ENCODE measurements at regions of chr10 and their contacts with region 1.

Region 1: DNA sequence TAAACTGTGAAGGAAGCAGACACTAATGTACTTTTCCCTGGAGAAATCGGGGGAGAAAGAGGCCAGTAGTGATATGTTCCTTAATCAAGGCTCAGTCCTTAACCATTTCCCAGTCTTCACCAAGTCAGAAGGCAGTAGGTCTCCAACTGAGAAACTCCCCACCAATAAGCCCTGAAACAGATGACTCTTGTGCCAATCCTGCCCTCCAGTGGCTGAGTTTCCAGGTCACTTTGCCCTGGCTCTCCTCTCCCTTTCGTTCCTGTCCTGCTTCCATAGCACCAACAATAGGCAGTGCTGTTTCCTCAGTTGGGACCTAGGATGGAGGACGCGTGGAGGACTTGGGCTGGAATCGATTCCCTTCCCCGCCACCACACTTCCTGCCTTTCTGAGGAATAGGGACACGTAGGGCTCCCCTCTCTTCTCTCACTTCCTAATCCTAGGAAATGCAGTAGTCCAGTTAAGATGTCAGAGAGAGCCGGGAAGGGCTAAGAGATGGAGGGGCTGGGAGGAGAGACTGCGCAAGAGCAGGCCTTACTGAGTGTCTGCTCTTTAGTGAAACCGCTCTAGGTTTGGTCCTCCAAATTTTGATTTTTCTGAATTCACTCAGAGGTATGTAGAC is 23.4 kb downstream of the ATOH7 start:
- DNase-seq: peak; percentile 81
- ATAC-seq: peak; percentile 97
- H3K4me3 ChIP-seq: no peak overlapping the region
- H3K27ac ChIP-seq: no peak overlapping the region
- H3K4me1 ChIP-seq: peaks cover 0 to 7% of the 10 kb centered on the region in 2 experiments; a peak in 1 of 4 replicates
- H3K27me3 ChIP-seq: no peaks in the 10 kb centered on the region
- CTCF ChIP-seq: peak; percentile 79 to 95 (median 80)
- POLR2A ChIP-seq: no peak
- RAD21 ChIP-seq: peak; percentile 98

Region 2: GRCh38 chr10:67788025-67788886 is 420.3 kb before region 1 on chr10:
- CTCF ChIA-PET with region 1: interaction called, 11 read pairs
- POLR2A ChIA-PET with region 1: no interaction called
- RAD21 ChIA-PET with region 1: interaction called, 5 read pairs
- intact Hi-C with region 1: loop called (anchors 1 kb)
- DNase-seq: peak; percentile 42
- ATAC-seq: peak; percentile 96
- H3K4me3 ChIP-seq: no peak overlapping the region
- H3K27ac ChIP-seq: no peak overlapping the region
- H3K4me1 ChIP-seq: peaks cover 0 to 7% of the 10 kb centered on the region in 2 experiments; a peak in 1 of 4 replicates
- H3K27me3 ChIP-seq: no peaks in the 10 kb centered on the region
- CTCF ChIP-seq: peak; percentile 69 to 89 (median 89); a peak in 5 of 6 replicates
- POLR2A ChIP-seq: no peak
- RAD21 ChIP-seq: peak; percentile 84

Region 3: GRCh38 chr10:67912339-67912946 is 296.1 kb before region 1 on chr10:
- CTCF ChIA-PET with region 1: no interaction called
- POLR2A ChIA-PET with region 1: no interaction called
- RAD21 ChIA-PET with region 1: no interaction called
- intact Hi-C with region 1: no loop called
- DNase-seq: no peak
- ATAC-seq: no peak
- H3K4me3 ChIP-seq: no peak overlapping the region
- H3K27ac ChIP-seq: no peak overlapping the region
- H3K4me1 ChIP-seq: no peaks in the 10 kb centered on the region
- H3K27me3 ChIP-seq: no peaks in the 10 kb centered on the region
- CTCF ChIP-seq: no peak
- POLR2A ChIP-seq: no peak
- RAD21 ChIP-seq: no peak

Region 4: DNA sequence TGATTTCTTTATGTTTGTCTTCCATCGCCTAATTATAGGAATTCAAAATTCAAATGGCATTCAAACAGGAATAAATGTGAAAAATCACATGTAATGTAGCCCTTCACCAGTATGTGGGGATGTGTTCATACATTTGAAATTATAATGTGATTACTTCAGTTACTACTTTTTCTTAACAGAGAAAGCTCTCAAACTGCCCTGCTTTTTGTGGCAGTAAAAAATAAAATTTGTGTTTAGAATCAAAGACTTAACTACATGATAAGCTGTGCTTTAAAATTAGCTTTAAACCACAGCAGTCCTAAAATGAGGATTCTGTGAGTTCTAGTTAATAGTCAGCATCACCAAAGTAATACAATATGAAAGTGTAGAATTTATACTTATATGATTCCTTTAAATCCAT is 125.7 kb before region 1 on chr10:
- CTCF ChIA-PET with region 1: interaction called, 13 read pairs
- POLR2A ChIA-PET with region 1: no interaction called
- RAD21 ChIA-PET with region 1: no interaction called
- intact Hi-C with region 1: loop called (anchors 1 kb)
- DNase-seq: no peak
- ATAC-seq: peak; percentile 52; the same call in 1 of the 2 replicates
- H3K4me3 ChIP-seq: no peak overlapping the region
- H3K27ac ChIP-seq: no peak overlapping the region
- H3K4me1 ChIP-seq: peaks cover 11 to 30% of the 10 kb centered on the region in 2 experiments
- H3K27me3 ChIP-seq: no peaks in the 10 kb centered on the region
- CTCF ChIP-seq: peak; percentile 32 to 84 (median 69); a peak in 5 of 6 replicates
- POLR2A ChIP-seq: no peak
- RAD21 ChIP-seq: peak; percentile 87

Region 5: GRCh38 chr10:68231106-68231816 is 22.7 kb after region 1 on chr10:
- CTCF ChIA-PET with region 1: interaction called, 10 read pairs
- POLR2A ChIA-PET with region 1: no interaction called
- RAD21 ChIA-PET with region 1: no interaction called
- intact Hi-C with region 1: no loop called
- DNase-seq: peak; percentile 45
- ATAC-seq: peak; percentile 95
- H3K4me3 ChIP-seq: peak overlapping the region; percentile 42 to 57
- H3K27ac ChIP-seq: peak overlapping the region; percentile 9; the same call in 1 of the 2 replicates
- H3K4me1 ChIP-seq: peaks cover 5 to 13% of the 10 kb centered on the region in 2 experiments; a peak in 3 of 4 replicates
- H3K27me3 ChIP-seq: no peaks in the 10 kb centered on the region
- CTCF ChIP-seq: no peak
- POLR2A ChIP-seq: no peak
- RAD21 ChIP-seq: no peak

Region 6: DNA sequence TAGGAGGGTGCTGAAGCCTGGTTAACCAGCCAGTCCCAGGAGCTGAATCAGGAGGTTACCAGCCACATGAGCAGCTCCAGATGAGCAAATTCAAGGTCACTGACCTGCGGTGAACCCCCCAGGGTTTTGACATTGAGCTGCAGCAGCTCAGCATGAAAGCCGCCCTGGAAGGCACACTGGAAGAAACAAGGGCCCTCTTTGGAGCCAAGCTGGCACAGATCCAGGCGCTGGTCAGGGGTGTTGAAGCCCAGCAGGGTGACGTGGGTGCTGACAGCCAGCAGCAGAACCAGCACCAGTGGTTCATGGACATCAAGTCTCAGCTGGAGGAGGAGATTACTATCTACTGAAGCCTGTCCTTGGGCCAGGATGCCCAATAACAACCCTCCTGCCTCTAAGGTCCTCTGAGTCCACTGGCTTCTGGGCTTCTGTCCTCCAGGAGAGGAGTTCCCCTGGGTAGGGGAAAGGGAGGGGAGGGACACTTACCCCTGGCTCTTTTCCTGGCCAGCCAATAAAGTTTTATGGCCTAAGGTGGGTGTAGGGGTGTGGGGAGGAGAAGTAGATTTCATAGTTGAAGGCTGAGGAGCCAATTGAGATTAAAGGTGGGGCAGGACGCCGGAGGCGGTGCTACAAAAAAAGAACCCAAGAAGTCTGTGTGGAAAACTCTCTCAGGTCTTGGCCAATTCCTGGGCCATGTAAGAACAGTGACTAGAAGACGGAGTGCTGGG is 52.8 kb after region 1 on chr10:
- CTCF ChIA-PET with region 1: no interaction called
- POLR2A ChIA-PET with region 1: no interaction called
- RAD21 ChIA-PET with region 1: no interaction called
- intact Hi-C with region 1: no loop called
- DNase-seq: no peak
- ATAC-seq: no peak
- H3K4me3 ChIP-seq: no peak overlapping the region
- H3K27ac ChIP-seq: no peak overlapping the region
- H3K4me1 ChIP-seq: no peaks in the 10 kb centered on the region
- H3K27me3 ChIP-seq: no peaks in the 10 kb centered on the region
- CTCF ChIP-seq: no peak
- POLR2A ChIP-seq: no peak
- RAD21 ChIP-seq: no peak

Region 7: GRCh38 chr10:68897336-68897741 is 688.8 kb after region 1 on chr10:
- CTCF ChIA-PET with region 1: interaction called, 10 read pairs
- POLR2A ChIA-PET with region 1: no interaction called
- RAD21 ChIA-PET with region 1: no interaction called
- intact Hi-C with region 1: loop called (anchors 2 kb)
- DNase-seq: peak; percentile 48
- ATAC-seq: no peak
- H3K4me3 ChIP-seq: no peak overlapping the region
- H3K27ac ChIP-seq: no peak overlapping the region
- H3K4me1 ChIP-seq: peaks cover 0 to 12% of the 10 kb centered on the region in 2 experiments; a peak in 2 of 4 replicates
- H3K27me3 ChIP-seq: no peaks in the 10 kb centered on the region
- CTCF ChIP-seq: peak; percentile 30 to 68 (median 61); a peak in 5 of 6 replicates
- POLR2A ChIP-seq: no peak
- RAD21 ChIP-seq: peak; percentile 88

Measured in HCT116 (cell line).